CD14-positive monocyte (primary cell): ENCODE measurements at regions of chr17 and their contacts with region 1.

Region 1: GRCh38 chr17:36629252-36629847 is 28.0 kb downstream of the MRM1 start:
- DNase-seq: peak; percentile 56 to 68 (median 66)
- H3K4me3 ChIP-seq: no peak overlapping the region
- H3K4me3 Mint-ChIP-seq: no peak overlapping the region
- H3K27ac ChIP-seq: no peak overlapping the region
- H3K27ac Mint-ChIP-seq: no peak overlapping the region
- H3K4me1 ChIP-seq: peaks cover 6 to 7% of the 10 kb centered on the region in 2 donors
- H3K4me1 Mint-ChIP-seq: peaks cover 5% of the 10 kb centered on the region
- H3K27me3 ChIP-seq: no peaks in the 10 kb centered on the region
- H3K27me3 Mint-ChIP-seq: peaks cover 5 to 8% (median 6%) of the 10 kb centered on the region in 3 donors
- CTCF ChIP-seq: peak; percentile 99

Region 2: DNA sequence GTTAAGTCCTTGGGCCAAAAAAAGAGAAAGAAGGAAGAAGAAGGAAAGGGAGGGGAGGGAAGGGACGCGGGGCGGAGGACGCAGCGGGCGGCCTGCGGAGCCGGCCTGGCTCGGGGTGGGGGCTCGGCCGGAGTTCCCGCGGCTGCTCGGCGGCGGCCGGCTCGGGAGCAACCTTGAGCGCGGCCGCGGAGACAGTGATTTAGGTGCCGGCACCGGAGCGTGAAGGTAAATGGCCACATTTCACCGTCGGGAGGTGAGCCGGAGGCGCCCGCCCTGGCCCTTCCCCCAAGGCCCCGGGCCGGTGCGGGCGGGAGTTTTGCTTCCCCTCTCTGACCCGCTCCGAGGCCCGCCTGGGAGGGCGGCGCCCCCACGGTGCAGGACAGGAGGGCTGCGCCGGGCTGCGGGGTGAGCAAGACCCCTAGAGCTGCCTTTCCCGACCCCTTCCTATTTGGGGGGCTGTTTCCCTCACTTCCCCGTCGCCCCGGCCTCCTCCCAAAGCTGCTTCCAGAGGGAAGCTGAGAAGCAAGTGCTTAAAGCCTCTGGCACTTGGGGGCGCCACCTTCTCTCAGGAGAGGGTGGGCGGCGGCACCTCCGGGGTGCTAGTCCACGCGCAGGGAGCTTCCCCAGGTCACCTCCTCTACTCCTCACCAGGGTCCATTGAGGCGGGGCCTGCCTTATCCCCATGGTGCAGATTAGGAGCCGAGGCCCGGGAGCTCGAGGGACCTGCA is 28.6 kb after region 1 on chr17:
- intact Hi-C with region 1: no loop called
- DNase-seq: no peak
- H3K4me3 ChIP-seq: peak overlapping the region in 2 of 3 experiments; percentile 1 to 54
- H3K4me3 Mint-ChIP-seq: peak overlapping the region; percentile 69 to 86
- H3K27ac ChIP-seq: no peak overlapping the region
- H3K27ac Mint-ChIP-seq: no peak overlapping the region
- H3K4me1 ChIP-seq: peaks cover 4 to 8% of the 10 kb centered on the region in 2 donors
- H3K4me1 Mint-ChIP-seq: peaks cover 12% of the 10 kb centered on the region
- H3K27me3 ChIP-seq: peaks cover 0 to 30% of the 10 kb centered on the region in 2 donors
- H3K27me3 Mint-ChIP-seq: peaks cover 27 to 53% (median 33%) of the 10 kb centered on the region in 3 donors
- CTCF ChIP-seq: no peak

Region 3: GRCh38 chr17:36674278-36674650 is 44.9 kb after region 1 on chr17:
- intact Hi-C with region 1: no loop called
- DNase-seq: no peak
- H3K4me3 ChIP-seq: no peak overlapping the region
- H3K4me3 Mint-ChIP-seq: no peak overlapping the region
- H3K27ac ChIP-seq: no peak overlapping the region
- H3K27ac Mint-ChIP-seq: no peak overlapping the region
- H3K4me1 ChIP-seq: peaks cover 0 to 6% of the 10 kb centered on the region in 2 donors
- H3K4me1 Mint-ChIP-seq: peaks cover 8% of the 10 kb centered on the region
- H3K27me3 ChIP-seq: no peaks in the 10 kb centered on the region
- H3K27me3 Mint-ChIP-seq: peaks cover 10 to 18% (median 12%) of the 10 kb centered on the region in 3 donors
- CTCF ChIP-seq: no peak

Region 4: GRCh38 chr17:37047631-37048104 is 418.3 kb after region 1 on chr17:
- intact Hi-C with region 1: loop called (anchors 1 to 5 kb)
- DNase-seq: peak; percentile 50 to 66 (median 57)
- H3K4me3 ChIP-seq: no peak overlapping the region
- H3K4me3 Mint-ChIP-seq: no peak overlapping the region
- H3K27ac ChIP-seq: no peak overlapping the region
- H3K27ac Mint-ChIP-seq: peak overlapping the region in 2 of 7 donors; percentile 28 to 55
- H3K4me1 ChIP-seq: no peaks in the 10 kb centered on the region
- H3K4me1 Mint-ChIP-seq: peaks cover 3% of the 10 kb centered on the region
- H3K27me3 ChIP-seq: no peaks in the 10 kb centered on the region
- H3K27me3 Mint-ChIP-seq: no peaks in the 10 kb centered on the region
- CTCF ChIP-seq: peak; percentile 76

Region 5: DNA sequence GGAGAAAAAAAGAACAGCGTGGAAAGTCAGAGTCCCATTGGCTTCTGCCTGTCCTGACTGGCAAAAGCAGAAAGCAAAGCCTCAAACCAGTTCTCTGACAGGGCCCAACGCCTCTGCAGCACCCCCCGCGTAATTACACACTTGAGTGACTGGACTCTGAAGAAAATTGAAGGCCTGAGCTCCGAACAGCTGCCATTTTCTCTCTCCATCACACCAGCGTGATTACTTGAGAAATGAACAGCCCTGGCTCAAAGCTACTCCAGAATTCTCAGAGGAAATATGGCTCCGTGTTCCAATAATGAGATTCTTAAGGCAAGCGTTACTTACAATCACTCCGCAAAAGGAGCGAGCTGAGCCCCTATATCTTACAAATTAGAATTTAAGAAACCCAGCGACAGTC is 603.7 kb after region 1 on chr17:
- intact Hi-C with region 1: loop called (anchors 5 kb)
- DNase-seq: no peak
- H3K4me3 ChIP-seq: no peak overlapping the region
- H3K4me3 Mint-ChIP-seq: no peak overlapping the region
- H3K27ac ChIP-seq: no peak overlapping the region
- H3K27ac Mint-ChIP-seq: no peak overlapping the region
- H3K4me1 ChIP-seq: no peaks in the 10 kb centered on the region
- H3K4me1 Mint-ChIP-seq: peaks cover 3% of the 10 kb centered on the region
- H3K27me3 ChIP-seq: no peaks in the 10 kb centered on the region
- H3K27me3 Mint-ChIP-seq: no peaks in the 10 kb centered on the region
- CTCF ChIP-seq: no peak

Region 6: GRCh38 chr17:37239690-37240334 is 610.5 kb after region 1 on chr17:
- intact Hi-C with region 1: loop called in 1 of 2 experiments (anchors 5 kb)
- DNase-seq: peak; percentile 1 to 6 (median 4)
- H3K4me3 ChIP-seq: no peak overlapping the region
- H3K4me3 Mint-ChIP-seq: no peak overlapping the region
- H3K27ac ChIP-seq: no peak overlapping the region
- H3K27ac Mint-ChIP-seq: no peak overlapping the region
- H3K4me1 ChIP-seq: no peaks in the 10 kb centered on the region
- H3K4me1 Mint-ChIP-seq: peaks cover 3% of the 10 kb centered on the region
- H3K27me3 ChIP-seq: no peaks in the 10 kb centered on the region
- H3K27me3 Mint-ChIP-seq: no peaks in the 10 kb centered on the region
- CTCF ChIP-seq: peak; percentile 70

Region 7: DNA sequence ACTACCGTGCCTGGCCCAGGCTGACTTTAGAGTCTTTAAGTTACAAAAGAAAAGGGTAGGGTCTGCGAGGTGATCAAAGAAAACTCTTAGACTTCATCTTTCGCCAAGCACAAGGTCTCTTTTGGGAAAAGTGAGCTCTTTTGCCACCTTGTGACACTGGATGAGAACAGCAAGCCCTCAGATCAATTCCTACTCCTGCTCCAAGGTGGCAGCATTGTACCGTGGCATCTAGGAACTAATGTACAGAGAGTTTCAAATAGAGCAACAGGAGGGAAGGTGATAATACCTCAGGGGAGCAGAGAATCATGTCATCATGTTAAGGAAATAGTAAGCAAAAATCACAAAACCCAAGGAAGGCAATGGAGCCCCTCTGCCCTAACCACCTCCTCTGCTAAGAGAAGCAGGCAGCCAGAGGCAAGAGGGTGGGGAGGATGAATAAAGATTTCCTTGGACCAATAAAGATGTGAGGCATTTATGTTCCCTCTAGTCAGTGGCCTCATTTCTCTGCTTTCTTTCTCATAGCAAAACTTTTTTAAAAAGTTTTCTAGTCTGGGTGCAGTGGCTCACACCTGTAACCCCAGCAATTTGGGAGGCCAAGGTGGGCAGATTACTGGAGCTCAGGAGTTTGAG is 744.3 kb after region 1 on chr17:
- intact Hi-C with region 1: loop called (anchors 10 kb)
- DNase-seq: peak; percentile 40 to 54 (median 52)
- H3K4me3 ChIP-seq: no peak overlapping the region
- H3K4me3 Mint-ChIP-seq: no peak overlapping the region
- H3K27ac ChIP-seq: no peak overlapping the region
- H3K27ac Mint-ChIP-seq: peak overlapping the region in 3 of 7 donors; percentile 32 to 73 (median 35)
- H3K4me1 ChIP-seq: peaks cover 1 to 2% of the 10 kb centered on the region in 2 donors
- H3K4me1 Mint-ChIP-seq: peaks cover 9% of the 10 kb centered on the region
- H3K27me3 ChIP-seq: no peaks in the 10 kb centered on the region
- H3K27me3 Mint-ChIP-seq: peaks cover 0 to 2% (median 0%) of the 10 kb centered on the region in 3 donors
- CTCF ChIP-seq: peak; percentile 95